ENCODE measurements at regions of chr2 and their contacts with region 1.

Region 1: DNA sequence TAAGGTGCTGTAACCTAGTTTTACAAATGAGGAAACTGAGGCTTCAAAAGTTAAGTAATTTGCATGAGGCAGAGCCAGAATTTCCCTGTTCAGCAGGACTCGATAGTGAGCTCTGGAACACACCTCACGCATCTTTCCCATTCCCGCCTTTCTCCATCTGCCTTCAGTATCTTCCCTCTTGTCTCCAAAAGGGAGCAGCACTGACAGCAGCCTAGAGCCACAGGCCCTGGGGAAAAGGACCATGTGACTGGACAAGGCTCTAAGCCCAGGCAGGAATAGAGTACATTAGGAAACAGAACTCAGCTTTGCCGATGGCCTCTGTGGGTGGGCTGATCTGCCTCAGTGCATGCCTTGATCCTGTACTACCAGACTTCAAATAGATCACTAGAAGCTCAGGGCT is 21.5 kb downstream of the GPR155 start:
- DNase-seq: no peak
- H3K4me3 Mint-ChIP-seq: no peak overlapping the region
- H3K27ac Mint-ChIP-seq: no peak overlapping the region
- H3K4me1 Mint-ChIP-seq: no peaks in the 10 kb centered on the region
- H3K27me3 Mint-ChIP-seq: no peaks in the 10 kb centered on the region

Region 2: DNA sequence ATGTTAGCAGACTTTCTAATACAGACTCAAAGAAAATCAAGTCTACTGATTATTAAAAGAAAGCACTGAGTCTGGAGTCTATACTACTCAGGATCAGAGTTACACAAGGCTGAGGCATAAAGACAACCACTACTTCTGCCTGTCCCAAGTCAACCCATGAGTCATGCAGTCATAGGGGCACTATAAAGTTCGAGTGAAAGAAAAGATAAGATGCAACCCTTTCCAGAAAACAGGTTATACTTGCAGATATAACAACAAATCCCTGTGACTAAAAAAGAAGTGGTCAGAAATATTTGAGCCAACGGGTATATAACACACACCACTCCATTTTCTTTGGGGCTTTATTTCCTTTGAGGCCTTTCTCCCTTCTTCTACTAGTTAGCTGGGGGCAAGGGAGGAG is 88.4 kb before region 1 on chr2:
- CTCF ChIA-PET with region 1: no interaction called
- POLR2A ChIA-PET with region 1: no interaction called
- intact Hi-C with region 1: no loop called
- DNase-seq: no peak
- H3K4me3 Mint-ChIP-seq: no peak overlapping the region
- H3K27ac Mint-ChIP-seq: no peak overlapping the region
- H3K4me1 Mint-ChIP-seq: no peaks in the 10 kb centered on the region
- H3K27me3 Mint-ChIP-seq: no peaks in the 10 kb centered on the region

Region 3: GRCh38 chr2:174487108-174487819 is 21.9 kb after region 1 on chr2:
- CTCF ChIA-PET with region 1: interaction called, 14 read pairs
- POLR2A ChIA-PET with region 1: no interaction called
- intact Hi-C with region 1: no loop called
- DNase-seq: peak; percentile 100
- H3K4me3 Mint-ChIP-seq: peak overlapping the region; percentile 93
- H3K27ac Mint-ChIP-seq: peak overlapping the region; percentile 95
- H3K4me1 Mint-ChIP-seq: peaks cover 50% of the 10 kb centered on the region
- H3K27me3 Mint-ChIP-seq: no peaks in the 10 kb centered on the region

Region 4: GRCh38 chr2:174536304-174536703 is 71.0 kb after region 1 on chr2:
- CTCF ChIA-PET with region 1: interaction called, 11 read pairs
- POLR2A ChIA-PET with region 1: no interaction called
- intact Hi-C with region 1: no loop called
- DNase-seq: no peak
- H3K4me3 Mint-ChIP-seq: no peak overlapping the region
- H3K27ac Mint-ChIP-seq: no peak overlapping the region
- H3K4me1 Mint-ChIP-seq: peaks cover 3% of the 10 kb centered on the region
- H3K27me3 Mint-ChIP-seq: no peaks in the 10 kb centered on the region

Region 5: DNA sequence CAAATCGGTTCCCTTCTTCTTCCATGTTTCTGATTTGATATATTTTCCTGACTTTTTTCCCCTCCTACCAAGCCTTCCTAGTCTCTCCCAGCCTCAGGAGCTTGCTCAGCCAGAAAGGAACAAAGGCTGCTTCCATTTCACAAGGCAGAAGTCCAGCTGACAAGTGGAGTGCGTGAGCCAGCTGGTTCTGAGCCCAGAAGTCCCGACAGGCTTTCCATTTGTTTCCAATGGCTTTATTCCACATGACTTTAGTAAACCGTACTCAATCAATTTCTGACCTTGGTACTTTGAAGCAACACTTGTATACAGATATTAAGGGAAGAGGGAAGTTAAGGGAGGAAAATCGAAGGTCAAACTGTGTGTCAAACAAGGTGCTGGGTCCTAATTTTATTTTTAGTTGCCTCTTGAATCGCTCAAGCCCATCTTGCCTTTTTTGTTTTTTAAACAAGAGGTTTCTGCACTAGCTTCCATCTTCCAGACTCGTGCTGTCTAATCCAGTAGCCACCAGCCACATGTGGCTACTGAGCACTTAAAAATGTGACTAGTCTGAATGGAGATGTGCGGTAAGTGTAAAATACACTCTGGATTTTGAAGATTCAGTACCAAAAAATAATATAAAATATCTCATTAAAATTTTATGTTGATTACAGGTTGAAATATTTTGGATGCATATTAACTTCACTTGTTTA is 96.1 kb after region 1 on chr2:
- CTCF ChIA-PET with region 1: interaction called, 21 read pairs
- POLR2A ChIA-PET with region 1: no interaction called
- intact Hi-C with region 1: no loop called
- DNase-seq: no peak
- H3K4me3 Mint-ChIP-seq: no peak overlapping the region
- H3K27ac Mint-ChIP-seq: peak overlapping the region; percentile 36
- H3K4me1 Mint-ChIP-seq: peaks cover 22% of the 10 kb centered on the region
- H3K27me3 Mint-ChIP-seq: no peaks in the 10 kb centered on the region

Region 6: DNA sequence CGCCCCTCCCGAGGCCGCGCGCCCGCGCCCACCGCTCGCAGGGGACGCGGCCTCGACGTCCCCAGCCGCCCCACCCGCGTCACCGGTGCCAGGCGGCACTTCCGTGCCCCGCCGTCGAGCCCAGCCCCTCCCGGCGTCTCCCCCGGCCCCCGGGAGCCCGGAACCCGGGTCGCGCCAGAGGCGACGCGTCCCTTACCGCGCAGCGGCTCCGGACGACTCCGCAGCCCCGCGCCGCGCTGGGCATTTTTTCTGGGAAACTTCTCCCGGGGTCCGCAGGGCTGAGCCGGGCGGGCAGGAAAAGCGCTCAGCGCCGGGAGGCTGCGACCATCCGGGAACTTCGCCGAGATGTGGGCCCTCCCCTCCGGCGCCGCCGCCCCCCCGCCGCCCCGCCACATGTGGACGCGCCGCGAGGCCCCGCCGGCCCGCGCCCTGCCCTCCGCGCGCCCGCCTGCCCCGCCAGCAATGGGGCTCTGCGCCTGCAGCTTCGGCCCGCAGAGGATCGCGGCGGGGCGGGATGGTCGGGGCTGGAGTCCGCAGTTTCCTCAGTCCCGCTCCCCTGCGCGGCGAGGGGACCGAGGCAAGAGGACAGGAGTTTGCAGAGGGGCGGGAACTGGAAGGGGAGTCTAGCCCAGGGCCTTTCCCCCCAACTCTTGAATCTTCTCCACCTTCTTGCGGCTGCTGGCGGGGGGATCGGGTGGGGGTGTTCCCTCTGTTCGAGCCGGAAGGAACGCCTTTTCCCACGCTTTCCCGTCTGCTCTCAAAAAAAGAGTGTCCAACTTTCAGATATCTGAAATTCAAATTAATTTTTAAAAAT is 217.5 kb after region 1 on chr2:
- CTCF ChIA-PET with region 1: interaction called, 97 read pairs
- POLR2A ChIA-PET with region 1: no interaction called
- intact Hi-C with region 1: no loop called
- DNase-seq: peak; percentile 62
- H3K4me3 Mint-ChIP-seq: peak overlapping the region; percentile 86
- H3K27ac Mint-ChIP-seq: peak overlapping the region; percentile 88
- H3K4me1 Mint-ChIP-seq: peaks cover 54% of the 10 kb centered on the region
- H3K27me3 Mint-ChIP-seq: no peaks in the 10 kb centered on the region

Measured in activated CD4-positive, alpha-beta memory T cell treated with anti-CD3 and anti-CD28 coated beads for 36 hours (primary cell).